ENCODE measurements at regions of chr20 and their contacts with region 1.

Region 1: GRCh38 chr20:36461600-36462439 is 79.5 kb upstream of the MYL9 start:
- DNase-seq: peak; percentile 68 to 86
- H3K4me3 ChIP-seq: peak overlapping the region; percentile 92 to 97
- H3K27ac ChIP-seq: peak overlapping the region; percentile 99
- H3K4me1 ChIP-seq: peaks cover 5 to 57% (median 43%) of the 10 kb centered on the region in 4 donors
- H3K27me3 ChIP-seq: no peaks in the 10 kb centered on the region
- CTCF ChIP-seq: no peak

Region 2: GRCh38 chr20:36145877-36146707 is 315.7 kb before region 1 on chr20:
- intact Hi-C with region 1: no loop called
- DNase-seq: peak; percentile 47 to 84
- H3K4me3 ChIP-seq: no peak overlapping the region
- H3K27ac ChIP-seq: peak overlapping the region; percentile 37 to 51
- H3K4me1 ChIP-seq: peaks cover 0 to 24% (median 19%) of the 10 kb centered on the region in 4 donors
- H3K27me3 ChIP-seq: no peaks in the 10 kb centered on the region
- CTCF ChIP-seq: no peak

Region 3: DNA sequence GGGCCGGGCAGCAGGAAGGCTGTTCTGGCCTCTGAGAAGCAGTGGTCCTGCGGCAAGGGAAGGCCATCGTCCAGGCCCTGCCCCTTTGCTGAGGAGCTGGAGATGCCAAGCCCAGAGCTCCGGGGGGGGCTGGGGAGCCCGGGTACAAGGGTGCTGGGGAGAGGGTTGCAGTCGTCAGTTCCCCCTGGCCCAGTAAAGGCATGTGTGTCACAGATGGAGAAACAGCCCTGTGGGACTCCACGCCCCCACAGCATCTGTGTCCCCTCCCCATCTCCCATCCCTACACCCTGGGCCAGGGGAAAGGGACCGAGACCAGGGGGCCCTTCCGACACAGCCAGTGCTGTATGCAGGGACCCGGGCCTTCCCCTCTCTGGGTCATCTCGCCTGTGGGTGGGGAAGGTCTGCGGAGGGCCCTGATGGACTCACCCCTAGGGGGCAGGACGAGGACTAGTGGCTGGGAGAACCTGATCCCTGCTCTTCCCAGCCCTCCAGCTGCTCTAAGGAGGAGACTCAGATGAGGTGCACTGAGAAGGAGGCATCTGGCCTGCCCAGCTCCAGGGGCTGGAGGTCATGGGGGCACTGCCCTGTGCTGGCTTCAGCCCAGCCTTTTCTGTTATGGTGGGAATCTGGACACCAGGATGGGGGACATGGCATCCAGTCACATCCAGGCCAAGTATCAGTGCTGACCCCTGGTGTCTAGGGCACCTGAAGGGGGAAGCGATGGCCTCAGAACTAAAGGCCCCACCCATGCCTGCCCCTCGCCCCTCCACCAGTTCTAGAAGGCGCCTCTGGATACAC is 80.1 kb after region 1 on chr20:
- intact Hi-C with region 1: loop called (anchors 2 kb)
- DNase-seq: peak; percentile 63 to 87
- H3K4me3 ChIP-seq: peak overlapping the region; percentile 85 to 99
- H3K27ac ChIP-seq: peak overlapping the region; percentile 97 to 99
- H3K4me1 ChIP-seq: peaks cover 0 to 77% (median 53%) of the 10 kb centered on the region in 4 donors
- H3K27me3 ChIP-seq: no peaks in the 10 kb centered on the region
- CTCF ChIP-seq: peak; percentile 67 to 69

Measured in tibial artery (tissue), 4 donors.